ENCODE measurements at regions of chr7 and their contacts with region 1.

Region 1: DNA sequence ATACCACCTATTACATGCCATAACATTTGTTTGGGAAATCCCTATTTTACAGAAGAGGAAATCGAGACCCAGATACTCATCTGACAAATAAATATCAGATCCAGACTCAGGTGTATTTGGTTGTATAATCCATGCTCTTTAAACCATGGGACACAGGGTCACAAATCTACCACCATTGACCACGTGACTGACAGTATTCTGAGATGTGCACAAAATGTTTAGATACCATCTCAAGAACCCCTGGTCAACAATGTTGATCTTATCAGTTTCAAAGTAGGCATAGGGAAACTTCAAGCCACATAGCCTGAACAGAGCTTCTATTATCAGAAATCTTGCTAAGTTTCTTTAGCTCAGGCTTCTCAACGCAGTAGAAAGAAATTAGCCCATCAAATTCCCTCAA is 93.6 kb downstream of the ICA1 start:
- DNase-seq: no peak
- ATAC-seq: no peak
- H3K4me3 ChIP-seq: no peak overlapping the region
- H3K4me3 Mint-ChIP-seq: no peak overlapping the region
- H3K27ac ChIP-seq: no peak overlapping the region
- H3K27ac Mint-ChIP-seq: no peak overlapping the region
- H3K4me1 ChIP-seq: no peaks in the 10 kb centered on the region
- H3K4me1 Mint-ChIP-seq: peaks cover under 1 to 14% (median 4%) of the 10 kb centered on the region in 7 donors
- H3K27me3 ChIP-seq: no peaks in the 10 kb centered on the region
- H3K27me3 Mint-ChIP-seq: peaks cover 0 to 23% (median 0%) of the 10 kb centered on the region in 5 donors

Region 2: DNA sequence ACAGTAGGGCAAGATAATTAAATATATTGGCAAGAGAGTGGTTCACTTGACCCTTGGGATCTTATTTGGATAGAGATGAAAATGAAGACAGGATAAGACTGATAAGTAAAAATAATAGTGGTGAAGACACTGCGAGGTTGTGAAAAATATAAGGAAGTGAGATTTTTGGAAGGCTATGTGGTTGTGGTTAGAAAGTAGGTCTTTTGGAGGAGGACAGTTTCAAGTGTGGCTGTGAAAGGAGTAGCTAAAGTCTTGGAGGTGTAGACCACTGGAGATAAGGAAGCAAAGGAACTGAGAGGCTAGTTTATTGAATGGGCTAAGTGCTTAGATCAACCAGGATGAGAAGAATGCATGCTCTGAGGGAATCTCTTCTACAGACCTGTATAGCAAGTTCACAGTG is 590.4 kb before region 1 on chr7:
- CTCF ChIA-PET with region 1: no interaction called
- POLR2A ChIA-PET with region 1: no interaction called
- intact Hi-C with region 1: loop called in 1 of 2 experiments (anchors 1 kb)
- DNase-seq: no peak
- ATAC-seq: peak; percentile 34
- H3K4me3 ChIP-seq: no peak overlapping the region
- H3K4me3 Mint-ChIP-seq: no peak overlapping the region
- H3K27ac ChIP-seq: no peak overlapping the region
- H3K27ac Mint-ChIP-seq: no peak overlapping the region
- H3K4me1 ChIP-seq: no peaks in the 10 kb centered on the region
- H3K4me1 Mint-ChIP-seq: peaks cover 0 to 15% (median 9%) of the 10 kb centered on the region in 7 donors
- H3K27me3 ChIP-seq: no peaks in the 10 kb centered on the region
- H3K27me3 Mint-ChIP-seq: no peaks in the 10 kb centered on the region

Region 3: GRCh38 chr7:8154272-8154671 is 14.1 kb before region 1 on chr7:
- CTCF ChIA-PET with region 1: no interaction called
- POLR2A ChIA-PET with region 1: no interaction called
- intact Hi-C with region 1: no loop called
- DNase-seq: no peak
- ATAC-seq: no peak
- H3K4me3 ChIP-seq: no peak overlapping the region
- H3K4me3 Mint-ChIP-seq: no peak overlapping the region
- H3K27ac ChIP-seq: no peak overlapping the region
- H3K27ac Mint-ChIP-seq: peak overlapping the region in 1 of 9 donors; percentile 28
- H3K4me1 ChIP-seq: peaks cover under 1 to 13% of the 10 kb centered on the region in 2 donors
- H3K4me1 Mint-ChIP-seq: peaks cover 11 to 44% (median 39%) of the 10 kb centered on the region in 7 donors
- H3K27me3 ChIP-seq: no peaks in the 10 kb centered on the region
- H3K27me3 Mint-ChIP-seq: peaks cover 0 to 4% (median 0%) of the 10 kb centered on the region in 5 donors